ENCODE measurements at regions of chr2 and their contacts with region 1.

Region 1: DNA sequence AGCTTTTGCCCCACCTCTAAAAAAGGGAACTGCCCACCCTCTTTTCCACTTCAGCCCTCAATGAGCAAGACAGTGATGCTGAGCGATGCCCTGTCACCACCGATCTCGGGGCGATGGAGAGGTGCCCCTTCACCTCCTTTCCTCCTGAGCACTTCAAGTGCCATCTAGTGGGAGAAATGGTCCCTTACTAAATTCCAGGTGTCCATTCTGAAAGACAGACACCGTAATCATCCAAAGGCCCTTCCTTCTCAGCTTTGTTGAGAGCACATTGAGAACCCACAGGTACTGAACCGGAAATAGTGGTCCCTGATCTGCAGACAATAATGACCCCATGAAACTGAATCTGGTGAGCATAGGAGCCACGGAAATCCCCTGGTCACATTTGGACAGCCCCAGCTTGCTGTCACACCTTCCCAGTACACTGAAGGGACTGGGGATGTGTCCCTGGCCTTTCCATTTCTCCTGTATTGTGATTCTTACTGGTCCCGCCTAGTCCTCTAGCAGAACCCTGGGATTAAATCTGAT is 38.5 kb downstream of the KCTD18 start:
- DNase-seq: peak; percentile 60 to 81 (median 76)
- H3K4me3 ChIP-seq: no peak overlapping the region
- H3K27ac ChIP-seq: no peak overlapping the region
- H3K4me1 ChIP-seq: no peaks in the 10 kb centered on the region
- H3K27me3 ChIP-seq: no peaks in the 10 kb centered on the region

Region 2: GRCh38 chr2:199966976-199967375 is 504.4 kb before region 1 on chr2:
- CTCF ChIA-PET with region 1: interaction called, 13 read pairs
- POLR2A ChIA-PET with region 1: no interaction called
- DNase-seq: no peak
- H3K4me3 ChIP-seq: no peak overlapping the region
- H3K27ac ChIP-seq: no peak overlapping the region
- H3K4me1 ChIP-seq: no peaks in the 10 kb centered on the region
- H3K27me3 ChIP-seq: no peaks in the 10 kb centered on the region

Region 3: GRCh38 chr2:199973703-199974102 is 497.7 kb before region 1 on chr2:
- CTCF ChIA-PET with region 1: interaction called, 28 read pairs
- POLR2A ChIA-PET with region 1: no interaction called
- DNase-seq: peak; percentile 32 to 62 (median 58)
- H3K4me3 ChIP-seq: no peak overlapping the region
- H3K27ac ChIP-seq: no peak overlapping the region
- H3K4me1 ChIP-seq: no peaks in the 10 kb centered on the region
- H3K27me3 ChIP-seq: no peaks in the 10 kb centered on the region

Region 4: GRCh38 chr2:199979832-199980628 is 491.4 kb before region 1 on chr2:
- CTCF ChIA-PET with region 1: interaction called, 28 read pairs
- POLR2A ChIA-PET with region 1: no interaction called
- DNase-seq: peak; percentile 79 to 86 (median 79)
- H3K4me3 ChIP-seq: peak overlapping the region in 4 of 7 experiments; percentile 9 to 44 (median 36)
- H3K27ac ChIP-seq: no peak overlapping the region
- H3K4me1 ChIP-seq: peaks cover 0 to 3% (median 0%) of the 10 kb centered on the region in 4 experiments
- H3K27me3 ChIP-seq: no peaks in the 10 kb centered on the region

Measured in common myeloid progenitor, CD34-positive (primary cell).